AG04449 (cell line): ENCODE measurements at regions of chr21 and their contacts with region 1.

Region 1: GRCh38 chr21:27802816-27803475 is 836.1 kb upstream of the ADAMTS5 start:
- DNase-seq: no peak
- H3K4me3 ChIP-seq: peak overlapping the region; percentile 21; the same call in 1 of the 2 replicates
- CTCF ChIP-seq: peak; percentile 66

Region 2: GRCh38 chr21:27787046-27787445 is 15.9 kb before region 1 on chr21:
- CTCF ChIA-PET with region 1: interaction called, 12 read pairs
- POLR2A ChIA-PET with region 1: no interaction called
- DNase-seq: no peak
- H3K4me3 ChIP-seq: no peak overlapping the region
- CTCF ChIP-seq: no peak

Region 3: GRCh38 chr21:27813750-27814149 is 10.8 kb after region 1 on chr21:
- CTCF ChIA-PET with region 1: interaction called, 17 read pairs
- POLR2A ChIA-PET with region 1: no interaction called
- DNase-seq: no peak
- H3K4me3 ChIP-seq: no peak overlapping the region
- CTCF ChIP-seq: no peak

Region 4: GRCh38 chr21:27818847-27819246 is 15.9 kb after region 1 on chr21:
- CTCF ChIA-PET with region 1: interaction called, 13 read pairs
- POLR2A ChIA-PET with region 1: no interaction called
- DNase-seq: no peak
- H3K4me3 ChIP-seq: no peak overlapping the region
- CTCF ChIP-seq: no peak